ENCODE measurements at regions of chrX and their contacts with region 1.

Region 1: DNA sequence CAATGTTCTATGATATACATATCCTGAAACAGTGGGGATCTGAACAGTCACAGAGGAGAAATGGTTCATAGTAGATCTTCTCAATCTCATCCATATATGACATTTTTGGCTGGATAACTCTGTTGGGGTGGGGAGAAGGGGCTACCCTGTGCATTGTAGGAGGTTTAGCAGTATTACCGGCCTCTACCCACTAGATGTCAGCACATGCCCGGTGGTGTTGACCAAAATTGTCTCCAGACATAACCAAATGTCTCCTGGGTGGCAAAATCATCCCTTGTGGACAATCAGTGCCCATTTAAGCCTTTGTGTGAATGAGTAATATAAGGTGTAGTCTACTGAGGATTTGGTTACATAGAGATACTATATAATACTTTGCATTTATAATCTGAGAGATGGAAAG is 89.9 kb downstream of the PLS3 start:
- DNase-seq: no peak
- ATAC-seq: no peak
- H3K4me3 Mint-ChIP-seq: no peak overlapping the region
- H3K27ac Mint-ChIP-seq: no peak overlapping the region
- H3K4me1 Mint-ChIP-seq: no peaks in the 10 kb centered on the region
- H3K27me3 Mint-ChIP-seq: no peaks in the 10 kb centered on the region
- CTCF ChIP-seq: no peak

Region 2: DNA sequence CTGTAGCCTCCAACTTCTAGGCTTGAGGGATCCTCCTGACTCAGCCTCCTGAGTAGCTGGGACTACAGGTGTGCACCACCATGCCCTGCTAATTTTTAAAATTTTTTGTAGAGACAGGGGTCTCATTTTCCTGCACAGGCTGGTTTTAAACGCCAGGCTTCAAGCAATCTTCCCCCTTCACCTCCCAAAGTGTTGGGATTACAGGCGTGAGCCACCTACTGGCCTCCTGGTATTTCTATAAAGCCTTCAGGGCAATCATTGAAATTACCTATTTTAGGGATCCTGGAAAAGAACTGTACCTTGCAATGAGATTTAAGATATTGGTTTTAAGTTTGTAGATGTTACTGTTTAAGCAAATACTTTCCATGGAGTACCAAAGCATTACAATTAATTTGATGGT is 103.5 kb before region 1 on chrX:
- CTCF ChIA-PET with region 1: no interaction called
- POLR2A ChIA-PET with region 1: no interaction called
- intact Hi-C with region 1: no loop called
- DNase-seq: no peak
- ATAC-seq: no peak
- H3K4me3 Mint-ChIP-seq: no peak overlapping the region
- H3K27ac Mint-ChIP-seq: no peak overlapping the region
- H3K4me1 Mint-ChIP-seq: no peaks in the 10 kb centered on the region
- H3K27me3 Mint-ChIP-seq: no peaks in the 10 kb centered on the region
- CTCF ChIP-seq: no peak

Region 3: GRCh38 chrX:115630204-115630603 is 20.7 kb before region 1 on chrX:
- CTCF ChIA-PET with region 1: no interaction called
- POLR2A ChIA-PET with region 1: no interaction called
- intact Hi-C with region 1: no loop called
- DNase-seq: no peak
- ATAC-seq: no peak
- H3K4me3 Mint-ChIP-seq: no peak overlapping the region
- H3K27ac Mint-ChIP-seq: no peak overlapping the region
- H3K4me1 Mint-ChIP-seq: no peaks in the 10 kb centered on the region
- H3K27me3 Mint-ChIP-seq: no peaks in the 10 kb centered on the region
- CTCF ChIP-seq: no peak

Region 4: GRCh38 chrX:115949898-115950822 is 299.2 kb after region 1 on chrX:
- CTCF ChIA-PET with region 1: no interaction called
- POLR2A ChIA-PET with region 1: no interaction called
- intact Hi-C with region 1: loop called (anchors 5 kb)
- DNase-seq: no peak
- ATAC-seq: no peak
- H3K4me3 Mint-ChIP-seq: no peak overlapping the region
- H3K27ac Mint-ChIP-seq: no peak overlapping the region
- H3K4me1 Mint-ChIP-seq: no peaks in the 10 kb centered on the region
- H3K27me3 Mint-ChIP-seq: no peaks in the 10 kb centered on the region
- CTCF ChIP-seq: no peak